ENCODE measurements at regions of chr12 and their contacts with region 1.

Region 1: GRCh38 chr12:124940549-124941527 is 26.4 kb upstream of the UBC start:
- DNase-seq: peak; percentile 83 to 91
- ATAC-seq: peak; percentile 71 to 72
- H3K4me3 ChIP-seq: peak overlapping the region; percentile 58 to 62 (median 60)
- H3K27ac ChIP-seq: peak overlapping the region; percentile 92 to 95 (median 94)
- H3K4me1 ChIP-seq: peaks cover 24 to 25% of the 10 kb centered on the region in 2 donors
- H3K27me3 ChIP-seq: no peaks in the 10 kb centered on the region
- CTCF ChIP-seq: peak; percentile 91 to 96 (median 94)
- POLR2A ChIP-seq: no peak

Region 2: DNA sequence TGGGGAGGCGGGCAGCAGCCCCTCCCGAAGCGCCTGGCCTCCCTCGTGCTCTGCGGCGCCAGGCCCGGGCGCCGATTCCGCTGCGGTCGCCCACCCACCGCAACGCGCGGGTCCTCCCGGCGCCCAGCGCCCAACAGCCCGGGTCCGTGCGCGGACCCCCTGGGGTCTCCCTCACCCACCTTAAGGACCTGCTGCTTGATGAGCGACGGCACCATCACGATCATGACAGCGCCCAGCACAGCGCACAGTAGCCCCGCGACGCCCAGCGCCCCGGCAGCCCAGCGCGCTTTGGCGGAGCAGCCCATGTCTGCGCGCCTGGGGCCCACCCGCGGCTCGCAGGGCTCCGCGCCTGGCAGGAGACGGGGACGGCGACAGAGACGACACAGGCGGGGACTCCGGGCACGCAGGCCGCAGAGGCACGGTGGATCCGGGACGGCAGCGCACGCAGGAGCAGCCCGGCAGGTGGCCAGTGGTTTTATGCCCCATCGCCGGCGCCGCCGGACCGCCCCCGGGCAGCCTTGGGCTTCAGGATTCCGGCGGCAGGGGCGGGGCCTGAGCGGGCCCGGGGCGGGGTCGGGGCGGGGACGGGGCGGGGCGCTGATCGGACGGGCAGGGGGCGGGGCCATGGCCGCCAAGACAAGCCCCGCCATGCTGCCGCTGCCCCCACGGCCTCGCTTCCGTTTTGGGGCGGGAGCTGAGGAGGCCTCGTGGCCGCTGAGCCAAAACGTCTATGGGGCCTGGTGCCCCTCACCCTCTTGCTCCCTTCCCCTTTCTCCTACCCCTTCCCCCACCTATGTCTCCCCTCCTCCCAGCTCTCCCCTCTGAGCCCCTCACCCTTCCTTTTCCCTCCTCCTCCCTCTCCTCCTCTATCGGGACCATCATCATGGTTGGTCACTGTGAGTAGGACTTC is 77.2 kb before region 1 on chr12 and contains the start of gene SCARB1:
- in situ Hi-C with region 1: no loop called
- intact Hi-C with region 1: loop called (anchors 2 kb)
- DNase-seq: peak; percentile 62 to 71
- ATAC-seq: peak; percentile 78 to 84
- H3K4me3 ChIP-seq: peak within 1 kb of the TSS; percentile 61 to 88 (median 81)
- H3K27ac ChIP-seq: peak within 1 kb of the TSS; percentile 64 to 82 (median 77)
- H3K4me1 ChIP-seq: peaks cover 3 to 18% of the 10 kb centered on the region in 2 donors
- H3K27me3 ChIP-seq: no peaks in the 10 kb centered on the region
- CTCF ChIP-seq: no peak
- POLR2A ChIP-seq: peak; percentile 34 to 71
- total RNA-seq, gene SCARB1: 5.4 to 8.7 (median 6.2) TPM

Region 3: GRCh38 chr12:124906606-124907261 is 34.1 kb before region 1 on chr12:
- in situ Hi-C with region 1: loop called in 1 of 4 experiments (anchors 5 kb)
- intact Hi-C with region 1: loop called (anchors 1 kb)
- DNase-seq: peak; percentile 88
- ATAC-seq: peak; percentile 52
- H3K4me3 ChIP-seq: no peak overlapping the region
- H3K27ac ChIP-seq: peak overlapping the region; percentile 56 to 78 (median 60)
- H3K4me1 ChIP-seq: peaks cover 29 to 32% of the 10 kb centered on the region in 2 donors
- H3K27me3 ChIP-seq: no peaks in the 10 kb centered on the region
- CTCF ChIP-seq: peak; percentile 90 to 98 (median 97)
- POLR2A ChIP-seq: no peak

Region 4: GRCh38 chr12:124917135-124917840 is 23.6 kb before region 1 on chr12:
- in situ Hi-C with region 1: no loop called
- intact Hi-C with region 1: loop called (anchors 2 kb)
- DNase-seq: peak; percentile 99 to 100
- ATAC-seq: peak; percentile 60 to 64
- H3K4me3 ChIP-seq: peak overlapping the region; percentile 40 to 85 (median 64)
- H3K27ac ChIP-seq: peak overlapping the region; percentile 98 to 100 (median 98)
- H3K4me1 ChIP-seq: peaks cover 27 to 40% of the 10 kb centered on the region in 2 donors
- H3K27me3 ChIP-seq: no peaks in the 10 kb centered on the region
- CTCF ChIP-seq: peak in 1 of 5 experiments; percentile 29
- POLR2A ChIP-seq: peak; percentile 48 to 62

Region 5: GRCh38 chr12:125140279-125141209 is 199.7 kb after region 1 on chr12:
- in situ Hi-C with region 1: no loop called
- intact Hi-C with region 1: no loop called
- DNase-seq: no peak
- ATAC-seq: no peak
- H3K4me3 ChIP-seq: no peak overlapping the region
- H3K27ac ChIP-seq: no peak overlapping the region
- H3K4me1 ChIP-seq: no peaks in the 10 kb centered on the region
- H3K27me3 ChIP-seq: no peaks in the 10 kb centered on the region
- CTCF ChIP-seq: no peak
- POLR2A ChIP-seq: no peak

Measured in gastrocnemius medialis (tissue), 4 donors.